PC-9 (cell line): ENCODE measurements at regions of chr3 and their contacts with region 1.

Region 1: DNA sequence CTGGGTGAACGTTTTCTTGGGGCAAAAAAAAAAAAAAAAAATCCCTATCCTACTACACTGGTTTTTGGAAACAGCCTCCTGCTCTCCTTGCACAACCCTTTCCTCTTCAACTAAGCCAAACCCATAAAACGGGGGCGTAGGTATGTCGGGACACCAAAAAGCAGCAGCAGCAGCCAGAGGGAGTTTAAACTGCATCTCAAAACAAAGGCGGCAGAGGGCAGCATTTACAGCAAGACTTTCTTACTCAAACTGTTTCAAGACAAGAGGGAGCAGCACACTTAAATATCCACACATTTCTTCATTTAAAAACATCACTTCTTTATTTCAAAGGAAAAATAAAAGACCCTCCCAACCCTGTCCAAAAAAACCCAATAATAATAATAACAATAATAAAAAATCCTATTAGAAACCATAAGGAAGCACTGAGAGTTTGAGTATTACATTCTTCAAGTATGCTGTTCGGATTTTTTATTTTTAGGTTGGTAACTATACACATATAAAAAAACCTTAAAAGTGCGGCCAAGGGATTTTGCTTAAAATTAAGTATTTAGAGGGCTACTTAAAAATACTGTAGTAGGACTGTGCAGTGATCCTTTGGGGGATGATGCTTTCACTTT is 43.9 kb upstream of the PLXND1 start:
- DNase-seq: peak; percentile 68 to 78
- H3K4me3 ChIP-seq: no peak overlapping the region
- H3K27ac ChIP-seq: peak overlapping the region; percentile 91
- H3K4me1 ChIP-seq: peaks cover 64% of the 10 kb centered on the region
- H3K27me3 ChIP-seq: no peaks in the 10 kb centered on the region
- CTCF ChIP-seq: peak; percentile 83

Region 2: GRCh38 chr3:129567176-129567705 is 83.1 kb before region 1 on chr3:
- CTCF ChIA-PET with region 1: no interaction called
- POLR2A ChIA-PET with region 1: no interaction called
- intact Hi-C with region 1: no loop called
- DNase-seq: no peak
- H3K4me3 ChIP-seq: no peak overlapping the region
- H3K27ac ChIP-seq: no peak overlapping the region
- H3K4me1 ChIP-seq: peaks cover 9% of the 10 kb centered on the region
- H3K27me3 ChIP-seq: no peaks in the 10 kb centered on the region
- CTCF ChIP-seq: no peak

Region 3: DNA sequence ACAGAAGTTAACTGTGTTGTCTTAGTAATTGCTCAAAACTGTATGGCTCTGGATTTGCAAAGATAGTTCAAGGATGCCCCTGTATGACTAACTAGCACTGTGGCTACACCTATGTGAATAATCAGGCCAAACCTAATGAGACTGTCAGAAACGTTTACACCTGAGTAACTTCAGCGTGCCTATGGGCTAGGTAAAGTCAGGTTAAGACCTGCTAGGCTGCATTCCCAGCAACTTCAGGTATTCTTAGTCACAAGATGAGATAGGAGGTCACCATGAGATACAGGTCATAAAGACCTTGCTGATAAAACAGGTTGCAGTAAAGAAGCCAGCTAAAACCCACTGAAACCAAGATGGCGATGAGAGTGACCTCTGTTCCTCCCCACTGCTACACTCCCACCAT is 43.9 kb after region 1 on chr3:
- CTCF ChIA-PET with region 1: no interaction called
- POLR2A ChIA-PET with region 1: no interaction called
- intact Hi-C with region 1: loop called (anchors 1 kb)
- DNase-seq: peak; percentile 77 to 99
- H3K4me3 ChIP-seq: no peak overlapping the region; the same call in 1 of the 2 replicates
- H3K27ac ChIP-seq: peak overlapping the region; percentile 91
- H3K4me1 ChIP-seq: peaks cover 56% of the 10 kb centered on the region
- H3K27me3 ChIP-seq: no peaks in the 10 kb centered on the region
- CTCF ChIP-seq: no peak

Region 4: DNA sequence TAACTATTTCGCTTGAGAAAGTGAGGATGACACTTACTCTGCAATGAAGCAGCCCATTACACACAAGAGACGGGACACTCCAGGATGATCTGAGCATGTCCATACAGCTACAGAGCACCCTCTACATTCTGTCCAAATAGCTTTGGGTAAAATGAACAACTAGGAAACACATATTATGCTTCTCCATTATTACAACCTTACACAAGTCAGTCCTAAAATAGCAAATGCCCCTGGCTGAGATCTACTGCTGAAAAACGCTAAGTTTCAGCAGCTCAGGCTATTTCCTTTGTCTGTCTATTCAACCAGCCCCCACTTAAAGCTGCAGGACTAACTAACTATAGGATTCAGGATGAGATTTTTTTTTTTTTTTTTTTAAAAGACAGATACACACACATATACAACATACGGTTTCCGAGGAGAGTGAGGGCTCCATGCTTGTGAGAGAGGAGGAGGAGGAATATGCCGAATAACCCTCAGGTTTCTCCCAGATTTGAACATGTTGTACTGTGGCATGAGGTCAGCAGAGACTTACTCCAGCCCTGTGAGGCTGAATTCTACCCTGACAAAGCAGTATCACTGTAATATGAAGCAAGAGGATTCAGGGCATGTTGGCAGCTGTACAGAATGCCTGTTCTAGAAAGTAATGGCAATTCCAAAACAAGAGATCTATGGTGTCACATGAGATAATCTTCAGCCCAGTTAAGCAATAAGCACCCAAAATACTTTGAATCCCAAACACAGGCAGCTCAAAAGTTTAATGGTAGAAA is 73.4 kb after region 1 on chr3:
- CTCF ChIA-PET with region 1: no interaction called
- POLR2A ChIA-PET with region 1: no interaction called
- intact Hi-C with region 1: loop called (anchors 1 kb)
- DNase-seq: peak; percentile 35 to 39
- H3K4me3 ChIP-seq: no peak overlapping the region
- H3K27ac ChIP-seq: peak overlapping the region; percentile 32
- H3K4me1 ChIP-seq: peaks cover 30% of the 10 kb centered on the region
- H3K27me3 ChIP-seq: no peaks in the 10 kb centered on the region
- CTCF ChIP-seq: no peak

Region 5: DNA sequence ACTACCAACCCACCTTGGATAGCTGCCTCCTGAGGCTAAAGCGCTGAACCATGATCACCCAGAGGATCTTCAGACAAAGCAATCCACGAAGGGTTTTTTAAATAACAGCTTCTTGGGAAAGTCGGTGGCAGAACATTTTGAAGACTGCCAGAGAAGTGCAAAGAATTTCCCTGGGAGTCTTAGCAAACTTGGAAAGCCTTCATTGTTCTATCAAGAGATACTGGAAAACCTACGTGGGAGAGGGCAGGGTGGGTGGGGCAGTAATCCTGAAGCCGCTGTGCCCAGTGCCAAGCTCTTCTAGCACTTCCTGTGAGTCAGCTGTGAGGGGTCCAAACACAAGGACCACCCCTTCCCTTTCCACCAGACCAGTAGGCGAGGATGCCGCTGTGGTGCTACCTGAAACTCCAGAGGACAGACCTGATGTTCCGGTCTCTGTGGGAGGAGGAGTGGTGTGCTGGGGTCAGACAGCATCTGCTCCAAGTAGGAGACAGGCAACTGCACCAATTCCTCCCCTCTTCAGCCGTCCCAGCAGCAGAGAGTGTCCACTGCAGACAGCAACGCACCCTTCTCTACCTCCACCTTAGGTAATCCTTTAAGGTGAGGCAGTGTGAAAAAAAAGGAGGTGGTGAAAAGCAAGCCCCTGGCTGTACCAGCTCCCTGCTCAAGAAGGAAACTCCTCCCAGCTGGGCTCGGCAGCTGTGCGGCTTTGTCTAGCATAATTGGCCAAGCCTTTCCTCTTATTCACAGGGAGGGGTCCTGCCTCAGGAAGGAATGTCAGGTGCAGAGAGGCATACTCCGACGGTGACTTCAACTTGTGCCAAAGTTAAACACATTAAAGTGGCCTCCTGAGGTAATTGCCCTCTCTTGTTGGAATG is 144.2 kb after region 1 on chr3:
- CTCF ChIA-PET with region 1: no interaction called
- POLR2A ChIA-PET with region 1: interaction called, 7 read pairs
- intact Hi-C with region 1: loop called (anchors 1 kb)
- DNase-seq: peak; percentile 93 to 99
- H3K4me3 ChIP-seq: peak overlapping the region; percentile 96
- H3K27ac ChIP-seq: peak overlapping the region; percentile 100
- H3K4me1 ChIP-seq: peaks cover 45% of the 10 kb centered on the region
- H3K27me3 ChIP-seq: no peaks in the 10 kb centered on the region
- CTCF ChIP-seq: no peak